G401 (cell line): ENCODE measurements at regions of chr16 and their contacts with region 1.

Region 1: DNA sequence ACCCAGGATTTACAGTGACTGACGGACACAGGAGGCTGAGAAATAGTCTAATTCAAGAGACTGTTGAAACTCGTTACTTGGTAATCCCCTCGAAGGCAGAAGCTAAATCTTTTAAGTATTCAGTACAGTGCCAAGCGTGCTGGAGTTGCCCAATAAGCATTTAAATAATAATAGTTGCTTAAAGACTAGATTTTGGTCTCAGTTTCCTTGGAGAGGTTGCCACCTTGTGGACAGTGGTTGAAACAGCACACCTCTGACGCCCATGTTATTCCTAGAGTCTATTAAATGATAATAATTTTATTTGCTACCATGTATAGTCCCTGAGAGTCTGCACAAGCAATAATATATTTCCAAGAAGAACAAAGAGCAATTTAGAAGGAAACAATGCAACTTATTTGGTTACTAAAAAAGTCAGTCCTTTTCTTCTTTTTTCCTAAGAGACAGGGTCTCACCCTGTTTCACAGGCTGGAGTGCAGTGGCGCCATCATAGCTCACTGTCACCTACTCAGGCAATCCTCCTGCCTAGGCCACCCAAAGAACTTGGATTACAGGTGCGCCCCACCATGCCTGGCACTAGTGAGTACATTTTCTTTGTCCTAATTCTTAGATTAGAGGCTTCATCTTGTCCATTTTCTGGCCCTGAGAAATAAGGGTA is 138.0 kb upstream of the NUDT7 start:
- DNase-seq: peak; percentile 85

Region 2: GRCh38 chr16:77246150-77246549 is 338.2 kb before region 1 on chr16:
- in situ Hi-C with region 1: loop called (anchors 10 kb)
- DNase-seq: no peak

Region 3: DNA sequence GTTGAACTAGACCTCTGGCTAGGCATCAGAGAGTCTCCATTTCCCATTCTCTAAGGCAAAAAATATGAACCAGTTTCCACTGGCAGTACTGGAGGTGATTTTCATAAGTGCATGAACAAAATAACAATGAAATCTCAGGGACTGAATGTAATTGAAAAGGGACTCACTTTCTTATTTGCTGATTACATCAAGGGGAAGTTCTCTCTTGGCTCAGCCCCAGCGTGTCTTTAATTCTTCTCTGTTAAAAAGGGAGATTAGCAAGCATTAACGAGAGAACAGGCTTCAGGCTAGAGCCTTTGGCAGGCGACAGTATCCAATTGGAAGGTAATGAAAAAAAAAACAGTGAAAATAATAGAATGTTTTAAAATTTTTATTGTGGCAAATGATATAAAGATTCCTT is 115.5 kb before region 1 on chr16:
- in situ Hi-C with region 1: no loop called
- DNase-seq: peak; percentile 87

Region 4: DNA sequence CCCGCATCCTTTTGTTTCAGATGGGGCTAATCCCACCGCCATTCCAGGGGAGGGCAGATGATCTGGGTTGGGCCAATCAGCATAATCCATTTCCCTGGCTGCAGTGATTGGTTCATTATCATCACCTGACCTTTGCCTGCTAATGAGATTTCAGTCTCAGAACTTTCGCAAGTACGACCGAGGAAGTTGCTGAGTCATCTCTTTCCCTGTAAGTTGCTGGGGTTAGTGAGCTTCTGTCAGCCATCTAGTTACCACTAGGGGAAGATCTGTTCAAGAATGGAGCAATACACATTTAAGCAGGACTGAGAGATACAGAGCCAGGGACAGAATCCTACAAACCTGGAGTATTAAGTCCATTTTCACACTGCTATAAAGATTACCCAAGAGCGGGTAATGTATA is 72.7 kb after region 1 on chr16:
- in situ Hi-C with region 1: no loop called
- DNase-seq: no peak